Sigmoid colon (tissue), 7 donors: ENCODE measurements at regions of chr6 and their contacts with region 1.

Region 1: DNA sequence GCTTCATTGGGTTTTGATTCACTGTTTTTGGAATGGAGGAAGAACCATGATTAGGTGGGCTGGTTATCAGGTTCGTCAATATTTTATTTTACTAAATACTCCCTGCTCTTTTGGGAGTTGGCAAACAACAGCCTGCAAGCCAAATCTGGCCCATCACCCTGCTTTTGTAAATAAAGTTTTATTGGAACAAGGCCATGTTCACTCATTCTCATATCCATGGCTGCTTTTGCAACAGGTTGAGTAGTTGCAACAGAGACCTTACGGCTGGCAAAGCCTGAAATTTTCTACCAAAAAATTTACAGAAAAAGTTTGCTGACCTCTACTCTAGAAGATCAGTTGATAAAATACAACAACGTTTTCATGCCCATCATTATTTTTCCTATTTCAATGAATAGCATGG is 45.1 kb downstream of the SYTL3 start:
- DNase-seq: peak; percentile 1
- H3K4me3 ChIP-seq: no peak overlapping the region
- H3K27ac ChIP-seq: no peak overlapping the region
- H3K4me1 ChIP-seq: peaks cover 0 to 14% (median 4%) of the 10 kb centered on the region in 4 donors
- H3K27me3 ChIP-seq: no peaks in the 10 kb centered on the region
- CTCF ChIP-seq: no peak
- EP300 ChIP-seq: no peak
- POLR2A ChIP-seq: no peak

Region 2: DNA sequence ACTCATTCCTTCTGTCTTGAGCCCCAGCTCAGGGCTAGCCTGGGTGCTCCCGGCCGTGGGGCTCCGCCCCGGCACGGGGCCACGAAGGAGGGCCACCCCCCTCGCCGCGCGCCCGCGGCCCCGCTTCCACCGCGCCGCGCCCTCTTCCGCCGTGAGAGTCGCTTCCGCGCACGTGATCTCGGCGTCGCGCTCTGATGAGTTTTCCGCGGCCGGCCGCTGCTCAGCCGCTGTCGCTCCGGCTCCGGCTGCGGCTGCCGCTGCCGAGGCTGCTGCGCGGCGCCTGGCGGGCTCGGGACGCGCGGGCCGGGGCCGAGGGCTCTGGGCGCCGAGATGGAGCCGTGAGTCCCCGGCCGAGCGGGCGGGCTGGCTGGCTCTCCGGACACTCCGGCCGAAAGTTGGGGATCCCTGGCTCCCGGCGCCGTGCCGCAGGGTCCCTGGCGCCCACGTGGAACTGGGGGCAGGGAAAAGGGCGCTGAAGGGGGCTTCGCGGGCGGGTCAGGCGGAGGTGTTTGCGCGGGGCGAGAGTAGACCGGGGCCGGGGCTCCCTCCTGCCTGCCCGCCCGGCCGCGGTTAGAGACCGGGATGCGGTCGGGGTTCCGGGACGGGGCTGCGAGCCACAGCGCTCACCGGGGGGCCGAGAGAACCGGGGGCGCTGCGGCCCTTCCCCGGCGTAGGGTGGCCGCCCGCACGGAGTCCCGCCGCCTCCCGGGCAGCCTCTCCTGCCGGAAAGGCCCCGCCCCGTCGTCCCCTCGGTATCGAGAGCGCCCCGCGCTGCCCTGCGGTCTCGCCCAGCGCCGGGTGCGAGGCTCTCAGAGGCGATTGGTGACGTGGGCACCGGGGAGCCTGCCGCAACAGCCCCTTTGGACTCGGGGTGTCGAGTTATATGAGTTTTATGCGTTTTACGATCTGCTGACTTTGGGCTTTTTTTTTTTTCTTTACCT is 134.7 kb before region 1 on chr6 and contains the start of gene TMEM181:
- intact Hi-C with region 1: loop called (anchors 5 kb)
- DNase-seq: peak; percentile 90
- H3K4me3 ChIP-seq: peak within 1 kb of the TSS; percentile 75 to 98 (median 88)
- H3K27ac ChIP-seq: peak within 1 kb of the TSS; percentile 88 to 98 (median 93)
- H3K4me1 ChIP-seq: peaks cover 0 to 28% (median 21%) of the 10 kb centered on the region in 4 donors
- H3K27me3 ChIP-seq: no peaks in the 10 kb centered on the region
- CTCF ChIP-seq: no peak
- EP300 ChIP-seq: no peak
- POLR2A ChIP-seq: no peak
- total RNA-seq, gene TMEM181: 20.8 to 24.7 (median 22.9) TPM

Region 3: GRCh38 chr6:158644231-158645063 is 50.5 kb before region 1 on chr6 and contains the start of gene DYNLT1:
- intact Hi-C with region 1: loop called (anchors 5 kb)
- DNase-seq: peak; percentile 95
- H3K4me3 ChIP-seq: peak within 1 kb of the TSS; percentile 83 to 98 (median 89)
- H3K27ac ChIP-seq: peak within 1 kb of the TSS; percentile 95 to 99 (median 96)
- H3K4me1 ChIP-seq: peaks cover 0 to 41% (median 35%) of the 10 kb centered on the region in 4 donors
- H3K27me3 ChIP-seq: no peaks in the 10 kb centered on the region
- CTCF ChIP-seq: no peak
- EP300 ChIP-seq: peak in 2 of 4 donors; percentile 25 to 39
- POLR2A ChIP-seq: peak; percentile 93 to 96
- total RNA-seq, gene DYNLT1: 68.7 to 118 (median 105) TPM

Region 4: GRCh38 chr6:158654960-158655489 is 39.9 kb before region 1 on chr6:
- intact Hi-C with region 1: loop called (anchors 5 kb)
- DNase-seq: no peak
- H3K4me3 ChIP-seq: no peak overlapping the region
- H3K27ac ChIP-seq: peak overlapping the region; percentile 78 to 87 (median 84)
- H3K4me1 ChIP-seq: peaks cover 0 to 25% (median 23%) of the 10 kb centered on the region in 4 donors
- H3K27me3 ChIP-seq: no peaks in the 10 kb centered on the region
- CTCF ChIP-seq: no peak
- EP300 ChIP-seq: no peak
- POLR2A ChIP-seq: no peak